ENCODE measurements at regions of chr5 and their contacts with region 1.

Region 1: GRCh38 chr5:137754126-137754960 is at the start of gene HNRNPA0:
- DNase-seq: peak; percentile 95 to 99 (median 96)
- ATAC-seq: peak; percentile 81
- H3K4me3 ChIP-seq: peak within 1 kb of the TSS; percentile 97
- H3K4me3 Mint-ChIP-seq: peak within 1 kb of the TSS; percentile 97
- H3K27ac ChIP-seq: peak within 1 kb of the TSS; percentile 100
- H3K27ac Mint-ChIP-seq: peak within 1 kb of the TSS; percentile 100
- H3K4me1 ChIP-seq: peaks cover 28% of the 10 kb centered on the region
- H3K4me1 Mint-ChIP-seq: peaks cover 37% of the 10 kb centered on the region
- H3K27me3 ChIP-seq: no peaks in the 10 kb centered on the region
- H3K27me3 Mint-ChIP-seq: no peaks in the 10 kb centered on the region
- CTCF ChIP-seq: no peak
- total RNA-seq, gene HNRNPA0: 52.7 to 53.2 TPM

Region 2: DNA sequence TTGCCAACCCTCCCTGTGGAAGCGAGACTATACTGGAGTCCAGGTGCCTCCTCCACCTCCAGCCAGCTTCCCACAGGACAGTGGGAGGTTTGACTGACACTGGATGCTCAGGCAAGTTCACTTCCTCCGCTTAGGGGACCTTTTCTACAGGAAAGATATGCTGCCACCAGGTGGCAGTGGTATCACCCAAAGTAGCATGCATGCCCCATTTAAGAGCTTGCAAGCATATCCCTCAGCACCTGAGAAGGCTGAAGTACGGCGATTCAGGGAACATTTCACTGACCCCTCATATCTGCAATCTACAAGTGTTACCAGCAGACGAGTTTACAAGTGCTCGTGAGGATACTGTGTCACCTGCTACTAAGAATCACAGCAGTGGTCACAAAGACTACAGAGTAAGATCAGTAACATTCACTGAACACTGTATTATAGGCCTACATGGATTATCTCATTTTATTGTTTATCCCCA is 94.0 kb before region 1 on chr5:
- CTCF ChIA-PET with region 1: interaction called, 28 read pairs
- POLR2A ChIA-PET with region 1: interaction called, 28 read pairs
- intact Hi-C with region 1: no loop called
- DNase-seq: peak; percentile 60 to 85 (median 67)
- ATAC-seq: peak; percentile 94
- H3K4me3 ChIP-seq: no peak overlapping the region
- H3K4me3 Mint-ChIP-seq: no peak overlapping the region
- H3K27ac ChIP-seq: no peak overlapping the region
- H3K27ac Mint-ChIP-seq: peak overlapping the region; percentile 3
- H3K4me1 ChIP-seq: peaks cover 6% of the 10 kb centered on the region
- H3K4me1 Mint-ChIP-seq: peaks cover 14% of the 10 kb centered on the region
- H3K27me3 ChIP-seq: no peaks in the 10 kb centered on the region
- H3K27me3 Mint-ChIP-seq: no peaks in the 10 kb centered on the region
- CTCF ChIP-seq: peak; percentile 89

Region 3: GRCh38 chr5:137695651-137696428 is 58.5 kb before region 1 on chr5:
- CTCF ChIA-PET with region 1: interaction called, 6 read pairs
- POLR2A ChIA-PET with region 1: interaction called, 63 read pairs
- intact Hi-C with region 1: no loop called
- DNase-seq: peak in 12 of 14 experiments; percentile 9 to 70 (median 34)
- ATAC-seq: peak; percentile 90
- H3K4me3 ChIP-seq: peak overlapping the region; percentile 11
- H3K4me3 Mint-ChIP-seq: peak overlapping the region; percentile 84
- H3K27ac ChIP-seq: peak overlapping the region; percentile 63 to 65
- H3K27ac Mint-ChIP-seq: peak overlapping the region; percentile 88
- H3K4me1 ChIP-seq: peaks cover 50% of the 10 kb centered on the region
- H3K4me1 Mint-ChIP-seq: peaks cover 71% of the 10 kb centered on the region
- H3K27me3 ChIP-seq: no peaks in the 10 kb centered on the region
- H3K27me3 Mint-ChIP-seq: no peaks in the 10 kb centered on the region
- CTCF ChIP-seq: peak; percentile 54

Region 4: DNA sequence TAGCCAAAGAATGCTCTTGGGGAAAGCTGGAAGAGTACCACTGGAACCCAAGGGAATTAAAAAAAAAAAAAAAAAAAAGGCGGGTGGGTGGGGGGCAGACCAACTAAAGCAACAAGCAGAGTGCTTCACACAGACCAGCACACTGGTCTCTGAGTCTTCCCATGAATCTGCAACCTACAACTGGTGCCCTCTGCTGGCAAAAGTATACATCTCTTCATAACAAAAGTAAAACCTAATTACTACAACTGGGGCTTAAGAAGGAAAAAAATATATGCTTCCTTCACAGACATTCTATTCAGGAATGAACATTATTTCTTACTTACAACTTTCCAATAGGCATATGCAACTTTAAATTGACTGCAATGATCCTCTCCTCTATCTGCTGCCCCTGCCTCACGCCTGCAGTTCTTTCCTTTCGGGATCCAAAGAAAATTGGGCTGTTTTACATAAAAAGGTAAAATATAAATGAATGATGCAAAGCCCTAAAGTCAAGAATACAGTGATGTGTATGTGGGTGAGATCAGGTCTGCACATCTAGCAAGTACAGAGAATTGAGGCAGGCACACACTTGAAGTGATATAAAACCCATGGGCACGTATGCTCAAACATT is 11.2 kb before region 1 on chr5:
- CTCF ChIA-PET with region 1: interaction called, 26 read pairs
- POLR2A ChIA-PET with region 1: interaction called, 80 read pairs
- intact Hi-C with region 1: no loop called
- DNase-seq: peak in 13 of 14 experiments; percentile 23 to 86 (median 52)
- ATAC-seq: peak; percentile 91
- H3K4me3 ChIP-seq: no peak overlapping the region
- H3K4me3 Mint-ChIP-seq: no peak overlapping the region
- H3K27ac ChIP-seq: no peak overlapping the region
- H3K27ac Mint-ChIP-seq: no peak overlapping the region
- H3K4me1 ChIP-seq: peaks cover 5% of the 10 kb centered on the region
- H3K4me1 Mint-ChIP-seq: peaks cover 20% of the 10 kb centered on the region
- H3K27me3 ChIP-seq: no peaks in the 10 kb centered on the region
- H3K27me3 Mint-ChIP-seq: no peaks in the 10 kb centered on the region
- CTCF ChIP-seq: peak; percentile 78

Region 5: GRCh38 chr5:138035605-138036537 is 281.5 kb after region 1 on chr5:
- CTCF ChIA-PET with region 1: no interaction called
- POLR2A ChIA-PET with region 1: interaction called, 5 read pairs
- intact Hi-C with region 1: loop called (anchors 1 to 5 kb)
- DNase-seq: peak; percentile 27 to 89 (median 44)
- ATAC-seq: peak; percentile 60
- H3K4me3 ChIP-seq: no peak overlapping the region
- H3K4me3 Mint-ChIP-seq: peak overlapping the region; percentile 87
- H3K27ac ChIP-seq: no peak overlapping the region
- H3K27ac Mint-ChIP-seq: peak overlapping the region; percentile 38
- H3K4me1 ChIP-seq: peaks cover 27% of the 10 kb centered on the region
- H3K4me1 Mint-ChIP-seq: peaks cover 35% of the 10 kb centered on the region
- H3K27me3 ChIP-seq: no peaks in the 10 kb centered on the region
- H3K27me3 Mint-ChIP-seq: no peaks in the 10 kb centered on the region
- CTCF ChIP-seq: peak; percentile 97

Region 6: DNA sequence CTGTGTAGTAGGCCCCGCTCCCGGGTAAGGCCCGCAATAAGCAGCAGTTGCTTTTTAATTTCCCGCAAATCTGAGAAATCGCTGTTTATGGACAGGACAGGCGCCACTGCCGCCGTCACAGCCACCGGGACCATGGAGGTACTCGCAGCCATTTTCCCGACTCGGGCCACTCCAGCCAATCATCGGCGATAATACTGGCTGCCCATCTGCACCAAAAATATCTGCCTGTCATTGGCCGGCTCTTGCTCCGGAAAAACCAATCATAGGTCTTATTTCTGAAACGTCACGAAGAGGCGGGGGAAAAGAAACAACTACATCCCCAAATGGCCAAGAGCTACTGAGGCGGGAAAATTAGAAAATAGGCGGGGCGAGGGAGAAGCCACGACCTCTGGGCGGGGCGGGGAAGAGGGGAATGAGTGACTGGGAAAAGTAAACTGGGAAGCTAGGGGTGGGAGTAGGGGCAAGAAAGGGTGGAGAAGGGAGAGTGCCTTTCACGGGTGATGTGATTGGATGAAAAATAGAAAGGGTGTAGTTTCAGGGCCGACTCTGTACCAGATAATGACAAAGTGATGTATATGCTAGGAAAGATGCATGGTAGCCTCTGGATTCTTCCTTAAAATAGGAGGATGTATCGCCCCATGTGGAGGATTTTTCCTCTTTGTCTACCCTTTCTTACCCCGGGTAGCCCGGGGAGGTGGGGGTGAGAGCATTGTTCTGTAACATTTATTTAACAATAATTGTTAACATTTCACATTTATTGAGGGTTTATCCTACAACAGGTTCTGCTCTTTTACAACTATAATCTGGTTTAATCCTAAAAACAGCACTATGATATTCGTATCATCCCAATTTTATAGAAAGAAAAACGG is 459.1 kb after region 1 on chr5 and contains the start of gene CDC23:
- CTCF ChIA-PET with region 1: no interaction called
- POLR2A ChIA-PET with region 1: interaction called, 6 read pairs
- intact Hi-C with region 1: loop called in 1 of 2 experiments (anchors 10 kb)
- DNase-seq: peak; percentile 78 to 98 (median 83)
- ATAC-seq: peak; percentile 98
- H3K4me3 ChIP-seq: peak within 1 kb of the TSS; percentile 90
- H3K4me3 Mint-ChIP-seq: peak within 1 kb of the TSS; percentile 95
- H3K27ac ChIP-seq: peak within 1 kb of the TSS; percentile 70 to 71
- H3K27ac Mint-ChIP-seq: peak within 1 kb of the TSS; percentile 91
- H3K4me1 ChIP-seq: peaks cover 23% of the 10 kb centered on the region
- H3K4me1 Mint-ChIP-seq: peaks cover 26% of the 10 kb centered on the region
- H3K27me3 ChIP-seq: peaks cover 0 to 2% of the 10 kb centered on the region in 2 experiments
- H3K27me3 Mint-ChIP-seq: peaks cover 4% of the 10 kb centered on the region
- CTCF ChIP-seq: no peak
- total RNA-seq, gene CDC23: 14.2 to 15.6 TPM

Measured in CD4-positive, alpha-beta T cell (primary cell).